Activated B cell treated with CpG ODN at 0.5 μM for 24 hours (primary cell): ENCODE measurements at regions of chr1 and their contacts with region 1.

Region 1: GRCh38 chr1:157704878-157705277 is 4.3 kb upstream of the FCRL3 start:
- DNase-seq: no peak
- ATAC-seq: peak; percentile 71
- H3K4me3 Mint-ChIP-seq: peak overlapping the region; percentile 42
- H3K27ac Mint-ChIP-seq: peak overlapping the region; percentile 74
- H3K4me1 Mint-ChIP-seq: peaks cover 95% of the 10 kb centered on the region
- H3K27me3 Mint-ChIP-seq: no peaks in the 10 kb centered on the region
- CTCF ChIP-seq: no peak

Region 2: GRCh38 chr1:157542676-157543075 is 162.2 kb before region 1 on chr1:
- CTCF ChIA-PET with region 1: no interaction called
- POLR2A ChIA-PET with region 1: interaction called, 18 read pairs
- intact Hi-C with region 1: no loop called
- DNase-seq: no peak
- ATAC-seq: no peak
- H3K4me3 Mint-ChIP-seq: no peak overlapping the region
- H3K27ac Mint-ChIP-seq: no peak overlapping the region
- H3K4me1 Mint-ChIP-seq: peaks cover 53% of the 10 kb centered on the region
- H3K27me3 Mint-ChIP-seq: no peaks in the 10 kb centered on the region
- CTCF ChIP-seq: no peak

Region 3: GRCh38 chr1:157725221-157725577 is 20.3 kb after region 1 on chr1:
- CTCF ChIA-PET with region 1: interaction called, 4 read pairs
- POLR2A ChIA-PET with region 1: interaction called, 30 read pairs
- intact Hi-C with region 1: loop called (anchors 1 kb)
- DNase-seq: no peak
- ATAC-seq: peak; percentile 17
- H3K4me3 Mint-ChIP-seq: peak overlapping the region; percentile 16
- H3K27ac Mint-ChIP-seq: peak overlapping the region; percentile 97
- H3K4me1 Mint-ChIP-seq: peaks cover 71% of the 10 kb centered on the region
- H3K27me3 Mint-ChIP-seq: no peaks in the 10 kb centered on the region
- CTCF ChIP-seq: no peak

Region 4: GRCh38 chr1:157849229-157849875 is 144.5 kb after region 1 on chr1:
- CTCF ChIA-PET with region 1: interaction called, 4 read pairs
- POLR2A ChIA-PET with region 1: interaction called, 18 read pairs
- intact Hi-C with region 1: no loop called
- DNase-seq: no peak
- ATAC-seq: peak; percentile 87
- H3K4me3 Mint-ChIP-seq: peak overlapping the region; percentile 81
- H3K27ac Mint-ChIP-seq: peak overlapping the region; percentile 94
- H3K4me1 Mint-ChIP-seq: peaks cover 64% of the 10 kb centered on the region
- H3K27me3 Mint-ChIP-seq: no peaks in the 10 kb centered on the region
- CTCF ChIP-seq: no peak